ENCODE measurements at regions of chr2 and their contacts with region 1.

Region 1: GRCh38 chr2:25131567-25132298 is 36.6 kb downstream of the POMC start:
- DNase-seq: peak; percentile 55 to 76
- H3K4me3 ChIP-seq: peak overlapping the region; percentile 27
- H3K4me3 Mint-ChIP-seq: peak overlapping the region; percentile 76
- H3K27ac Mint-ChIP-seq: peak overlapping the region; percentile 49
- H3K4me1 ChIP-seq: peaks cover 16% of the 10 kb centered on the region
- H3K4me1 Mint-ChIP-seq: peaks cover 20% of the 10 kb centered on the region
- H3K27me3 ChIP-seq: no peaks in the 10 kb centered on the region
- H3K27me3 Mint-ChIP-seq: no peaks in the 10 kb centered on the region
- CTCF ChIP-seq: no peak

Region 2: GRCh38 chr2:24409700-24410556 is 721.8 kb before region 1 on chr2:
- CTCF ChIA-PET with region 1: no interaction called
- POLR2A ChIA-PET with region 1: no interaction called
- intact Hi-C with region 1: loop called (anchors 1 kb)
- DNase-seq: peak; percentile 49 to 66
- H3K4me3 ChIP-seq: no peak overlapping the region
- H3K4me3 Mint-ChIP-seq: no peak overlapping the region
- H3K27ac Mint-ChIP-seq: no peak overlapping the region
- H3K4me1 ChIP-seq: no peaks in the 10 kb centered on the region
- H3K4me1 Mint-ChIP-seq: no peaks in the 10 kb centered on the region
- H3K27me3 ChIP-seq: no peaks in the 10 kb centered on the region
- H3K27me3 Mint-ChIP-seq: no peaks in the 10 kb centered on the region
- CTCF ChIP-seq: peak; percentile 80 to 90

Region 3: DNA sequence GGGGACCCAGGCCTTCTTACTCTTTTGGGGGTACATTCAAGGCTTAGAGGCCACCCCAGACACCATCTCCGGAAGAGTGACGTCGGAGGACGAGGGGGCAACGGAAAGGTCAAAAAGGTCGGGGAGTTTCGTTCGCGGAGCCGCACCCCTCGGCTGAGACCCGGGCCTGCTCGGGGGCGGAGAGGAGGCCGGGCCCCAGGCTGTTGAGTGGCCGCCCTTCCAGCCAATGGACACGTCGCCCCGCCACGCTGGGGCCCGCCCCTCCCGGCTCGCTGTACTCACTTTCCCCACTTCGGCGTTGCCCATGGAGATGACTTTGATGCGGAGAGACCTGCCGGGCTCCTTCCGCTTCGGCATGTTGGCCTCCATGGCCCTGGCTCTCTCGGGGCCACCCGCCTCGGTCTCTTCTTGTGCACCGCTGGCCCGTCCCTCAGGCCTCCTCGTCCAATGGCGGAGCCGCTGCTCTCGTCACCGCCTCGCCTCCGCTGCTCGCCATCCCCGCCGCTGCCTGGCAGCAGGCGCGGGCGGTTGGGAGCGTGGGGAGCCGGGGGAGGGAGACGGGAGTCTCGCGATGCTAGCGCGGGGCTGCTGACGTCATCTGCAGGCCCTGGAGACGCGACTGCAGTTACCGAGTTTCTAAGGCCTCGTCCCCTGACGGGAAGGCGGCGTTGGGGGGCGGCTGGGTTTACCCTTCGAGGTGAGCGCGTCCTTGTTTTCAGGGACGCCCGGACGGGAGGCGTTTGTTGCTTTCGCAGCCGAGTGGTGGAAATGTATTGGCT is 160.0 kb before region 1 on chr2 and contains the start of gene DNAJC27:
- CTCF ChIA-PET with region 1: interaction called, 70 read pairs
- POLR2A ChIA-PET with region 1: interaction called, 3 read pairs
- intact Hi-C with region 1: loop called (anchors 1 kb)
- DNase-seq: peak; percentile 98
- H3K4me3 ChIP-seq: peak within 1 kb of the TSS; percentile 55
- H3K4me3 Mint-ChIP-seq: peak within 1 kb of the TSS; percentile 90
- H3K27ac Mint-ChIP-seq: peak within 1 kb of the TSS; percentile 98
- H3K4me1 ChIP-seq: no peaks in the 10 kb centered on the region
- H3K4me1 Mint-ChIP-seq: no peaks in the 10 kb centered on the region
- H3K27me3 ChIP-seq: no peaks in the 10 kb centered on the region
- H3K27me3 Mint-ChIP-seq: no peaks in the 10 kb centered on the region
- CTCF ChIP-seq: no peak
- total RNA-seq, gene DNAJC27: 5.1 and 6.1 TPM in 2 replicates

Region 4: DNA sequence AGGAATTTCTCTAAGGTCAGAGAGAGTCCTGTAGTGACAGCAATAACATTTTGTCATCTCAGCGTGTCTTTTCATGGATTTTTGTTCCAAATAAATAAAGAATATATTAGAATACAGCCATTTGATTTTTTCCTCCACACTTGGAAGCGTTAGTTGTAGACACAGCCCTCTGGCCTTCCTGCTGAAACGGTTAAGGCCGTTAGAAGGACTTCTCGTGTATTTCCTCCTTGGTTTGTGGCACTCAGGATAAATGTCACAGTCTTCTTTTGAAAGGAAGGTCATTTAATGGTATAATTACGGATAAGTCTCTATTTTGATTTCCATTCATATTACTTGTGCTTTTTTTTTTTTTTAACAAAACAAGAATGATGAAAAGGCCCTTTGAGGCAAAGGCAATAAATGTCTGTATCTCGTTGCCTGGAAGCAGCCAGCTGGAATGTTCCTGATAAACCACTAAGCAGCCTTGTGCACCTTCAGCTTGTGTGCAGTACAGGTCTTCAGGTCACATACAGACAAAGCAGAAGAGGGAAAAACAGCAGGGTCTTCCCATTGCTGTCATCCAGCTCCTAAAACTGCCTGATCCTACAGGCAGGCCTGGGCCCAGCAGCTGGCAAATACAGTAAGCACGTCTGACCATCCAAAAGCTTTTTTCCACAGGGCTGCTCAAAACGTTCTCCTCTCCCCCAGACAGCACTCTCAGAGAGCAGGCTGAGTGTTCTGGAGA is 75.5 kb before region 1 on chr2:
- CTCF ChIA-PET with region 1: interaction called, 8 read pairs
- POLR2A ChIA-PET with region 1: no interaction called
- intact Hi-C with region 1: loop called (anchors 2 kb)
- DNase-seq: peak in 1 of 2 experiments; percentile 57
- H3K4me3 ChIP-seq: no peak overlapping the region
- H3K4me3 Mint-ChIP-seq: no peak overlapping the region
- H3K27ac Mint-ChIP-seq: peak overlapping the region; percentile 77
- H3K4me1 ChIP-seq: peaks cover 25% of the 10 kb centered on the region
- H3K4me1 Mint-ChIP-seq: peaks cover 17% of the 10 kb centered on the region
- H3K27me3 ChIP-seq: no peaks in the 10 kb centered on the region
- H3K27me3 Mint-ChIP-seq: no peaks in the 10 kb centered on the region
- CTCF ChIP-seq: no peak

Region 5: GRCh38 chr2:25151718-25152117 is 20.0 kb after region 1 on chr2:
- CTCF ChIA-PET with region 1: no interaction called
- POLR2A ChIA-PET with region 1: no interaction called
- intact Hi-C with region 1: no loop called
- DNase-seq: no peak
- H3K4me3 ChIP-seq: no peak overlapping the region
- H3K4me3 Mint-ChIP-seq: no peak overlapping the region
- H3K27ac Mint-ChIP-seq: peak overlapping the region; percentile 17
- H3K4me1 ChIP-seq: no peaks in the 10 kb centered on the region
- H3K4me1 Mint-ChIP-seq: no peaks in the 10 kb centered on the region
- H3K27me3 ChIP-seq: no peaks in the 10 kb centered on the region
- H3K27me3 Mint-ChIP-seq: no peaks in the 10 kb centered on the region
- CTCF ChIP-seq: no peak

Region 6: GRCh38 chr2:25165992-25166875 is 34.5 kb after region 1 on chr2:
- CTCF ChIA-PET with region 1: no interaction called
- POLR2A ChIA-PET with region 1: no interaction called
- intact Hi-C with region 1: loop called (anchors 1 kb)
- DNase-seq: peak; percentile 50 to 63
- H3K4me3 ChIP-seq: no peak overlapping the region
- H3K4me3 Mint-ChIP-seq: no peak overlapping the region
- H3K27ac Mint-ChIP-seq: no peak overlapping the region
- H3K4me1 ChIP-seq: peaks cover 6% of the 10 kb centered on the region; the same call in 1 of the 2 replicates
- H3K4me1 Mint-ChIP-seq: no peaks in the 10 kb centered on the region
- H3K27me3 ChIP-seq: no peaks in the 10 kb centered on the region
- H3K27me3 Mint-ChIP-seq: peaks cover 4% of the 10 kb centered on the region
- CTCF ChIP-seq: peak; percentile 47 to 52

Region 7: DNA sequence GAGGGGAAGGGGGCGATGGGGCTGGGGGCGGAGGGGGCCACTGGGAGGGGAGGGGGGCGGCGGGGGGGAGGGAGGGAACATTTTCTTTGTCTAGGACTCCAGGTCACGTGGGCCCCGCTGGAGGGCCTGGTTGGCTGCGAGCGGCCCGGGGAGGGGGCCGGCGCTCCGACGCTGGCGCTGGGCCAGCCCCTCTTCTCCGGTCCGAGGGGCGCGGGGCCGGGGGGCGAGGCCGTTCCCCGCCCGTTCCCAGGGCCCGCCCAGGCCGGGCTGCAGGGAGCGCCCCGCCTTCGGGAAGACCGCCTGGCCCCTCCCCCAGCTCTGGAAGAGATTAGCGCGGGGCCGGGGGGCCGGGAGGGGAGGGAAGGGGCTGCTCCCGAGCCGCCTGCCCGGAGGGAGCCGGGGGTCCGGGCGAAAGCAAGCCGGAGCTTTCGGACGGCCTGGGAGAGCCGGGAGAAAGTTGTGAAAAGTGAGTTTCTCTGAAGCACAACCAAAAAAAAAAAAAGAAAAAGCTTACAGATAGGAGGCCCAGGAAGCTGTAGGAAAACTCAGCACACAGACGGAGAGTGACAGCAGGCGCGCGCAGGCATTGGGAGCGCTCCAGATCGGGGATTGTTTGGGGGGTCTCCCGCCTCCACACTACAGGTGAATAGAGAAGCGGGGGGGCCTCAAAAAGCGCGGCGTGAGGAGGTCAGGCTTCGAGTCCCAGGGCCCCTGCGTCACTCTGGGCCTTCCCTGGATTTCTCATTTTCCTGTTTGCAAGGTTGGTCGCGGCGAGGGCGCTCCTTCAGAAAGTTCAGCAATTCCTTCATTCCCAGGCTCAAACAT is 120.8 kb after region 1 on chr2:
- CTCF ChIA-PET with region 1: no interaction called
- POLR2A ChIA-PET with region 1: no interaction called
- intact Hi-C with region 1: no loop called
- DNase-seq: peak; percentile 90 to 93
- H3K4me3 ChIP-seq: peak overlapping the region; percentile 89
- H3K4me3 Mint-ChIP-seq: peak overlapping the region; percentile 83
- H3K27ac Mint-ChIP-seq: peak overlapping the region; percentile 81
- H3K4me1 ChIP-seq: peaks cover 31% of the 10 kb centered on the region
- H3K4me1 Mint-ChIP-seq: peaks cover 27% of the 10 kb centered on the region
- H3K27me3 ChIP-seq: no peaks in the 10 kb centered on the region; the same call in 1 of the 2 replicates
- H3K27me3 Mint-ChIP-seq: peaks cover 13% of the 10 kb centered on the region
- CTCF ChIP-seq: no peak

Measured in Caco-2 (cell line).